ENCODE measurements at regions of chr1 and their contacts with region 1.

Region 1: GRCh38 chr1:87864676-87865075 is 536.0 kb downstream of the LMO4 start:
- DNase-seq: no peak
- H3K4me3 ChIP-seq: no peak overlapping the region
- H3K27ac ChIP-seq: no peak overlapping the region
- H3K4me1 ChIP-seq: no peaks in the 10 kb centered on the region
- H3K27me3 ChIP-seq: no peaks in the 10 kb centered on the region
- CTCF ChIP-seq: no peak
- EP300 ChIP-seq: no peak
- POLR2A ChIP-seq: no peak

Region 2: DNA sequence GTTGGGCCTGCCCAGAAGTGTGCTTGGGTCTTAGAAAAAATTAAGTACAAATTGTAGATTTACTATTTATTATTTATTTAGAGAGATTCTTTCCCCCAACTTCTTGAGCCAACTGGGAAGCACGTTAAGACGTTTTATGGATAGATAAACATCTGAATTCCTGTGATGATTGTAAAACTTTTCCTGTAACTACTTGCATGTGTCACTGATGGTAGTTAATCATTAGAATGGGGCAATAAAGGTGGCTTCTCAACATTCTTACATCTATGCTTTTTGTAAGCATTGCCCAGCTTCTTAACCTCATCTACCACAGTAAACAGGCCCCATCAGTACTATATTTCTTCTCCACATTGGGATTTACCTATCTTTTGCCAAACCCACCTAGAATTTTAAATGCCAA is 23.8 kb after region 1 on chr1:
- in situ Hi-C with region 1: no loop called
- intact Hi-C with region 1: loop called (anchors 1 kb)
- DNase-seq: no peak
- H3K4me3 ChIP-seq: no peak overlapping the region
- H3K27ac ChIP-seq: peak overlapping the region in 3 of 4 donors; percentile 12 to 45 (median 41)
- H3K4me1 ChIP-seq: peaks cover 11 to 25% (median 14%) of the 10 kb centered on the region in 4 donors
- H3K27me3 ChIP-seq: no peaks in the 10 kb centered on the region
- CTCF ChIP-seq: no peak
- EP300 ChIP-seq: no peak
- POLR2A ChIP-seq: no peak

Region 3: DNA sequence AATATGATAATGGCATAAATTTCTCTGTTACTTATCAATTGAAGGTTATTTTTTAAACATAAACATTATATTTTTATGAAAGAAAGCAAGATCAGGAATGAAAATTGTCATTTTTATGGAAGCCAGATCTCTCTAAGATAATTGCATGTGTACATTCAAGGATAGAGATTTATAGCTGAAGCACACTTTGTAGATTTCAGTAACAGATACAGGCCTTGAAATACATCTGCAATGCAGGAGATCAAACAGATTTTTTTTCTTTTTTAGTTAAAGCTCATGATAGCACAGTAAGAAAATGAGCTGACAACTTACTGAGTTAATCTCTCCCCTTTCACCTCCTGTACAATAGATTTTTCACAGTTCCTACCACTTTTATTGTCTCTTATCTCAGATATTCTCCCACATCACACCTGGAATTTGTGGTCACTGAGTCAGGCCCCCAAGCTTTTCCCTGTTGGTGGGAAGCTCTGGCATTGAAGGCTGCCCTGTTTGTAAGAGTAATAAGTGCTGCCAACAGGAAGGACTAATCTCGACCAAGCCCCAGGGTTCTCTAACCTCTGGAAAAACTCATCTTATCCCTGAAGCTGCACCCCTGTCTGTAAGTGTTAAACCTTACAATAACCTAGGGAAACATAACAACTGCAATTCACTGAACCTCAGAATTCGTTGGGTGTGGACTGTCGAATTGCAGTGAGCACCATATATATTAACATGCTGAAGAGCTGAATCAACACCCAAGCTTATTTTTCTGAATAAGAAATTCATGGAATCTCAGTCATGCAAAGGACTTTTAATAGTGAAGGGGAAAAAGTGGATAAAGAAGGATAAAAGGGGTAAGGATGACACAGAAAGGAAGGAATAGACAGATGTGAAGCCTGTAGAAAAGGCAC is 63.0 kb after region 1 on chr1:
- in situ Hi-C with region 1: no loop called
- intact Hi-C with region 1: no loop called
- DNase-seq: no peak
- H3K4me3 ChIP-seq: no peak overlapping the region
- H3K27ac ChIP-seq: no peak overlapping the region
- H3K4me1 ChIP-seq: peaks cover 0 to 3% (median 0%) of the 10 kb centered on the region in 4 donors
- H3K27me3 ChIP-seq: no peaks in the 10 kb centered on the region
- CTCF ChIP-seq: no peak
- EP300 ChIP-seq: no peak
- POLR2A ChIP-seq: no peak

Region 4: DNA sequence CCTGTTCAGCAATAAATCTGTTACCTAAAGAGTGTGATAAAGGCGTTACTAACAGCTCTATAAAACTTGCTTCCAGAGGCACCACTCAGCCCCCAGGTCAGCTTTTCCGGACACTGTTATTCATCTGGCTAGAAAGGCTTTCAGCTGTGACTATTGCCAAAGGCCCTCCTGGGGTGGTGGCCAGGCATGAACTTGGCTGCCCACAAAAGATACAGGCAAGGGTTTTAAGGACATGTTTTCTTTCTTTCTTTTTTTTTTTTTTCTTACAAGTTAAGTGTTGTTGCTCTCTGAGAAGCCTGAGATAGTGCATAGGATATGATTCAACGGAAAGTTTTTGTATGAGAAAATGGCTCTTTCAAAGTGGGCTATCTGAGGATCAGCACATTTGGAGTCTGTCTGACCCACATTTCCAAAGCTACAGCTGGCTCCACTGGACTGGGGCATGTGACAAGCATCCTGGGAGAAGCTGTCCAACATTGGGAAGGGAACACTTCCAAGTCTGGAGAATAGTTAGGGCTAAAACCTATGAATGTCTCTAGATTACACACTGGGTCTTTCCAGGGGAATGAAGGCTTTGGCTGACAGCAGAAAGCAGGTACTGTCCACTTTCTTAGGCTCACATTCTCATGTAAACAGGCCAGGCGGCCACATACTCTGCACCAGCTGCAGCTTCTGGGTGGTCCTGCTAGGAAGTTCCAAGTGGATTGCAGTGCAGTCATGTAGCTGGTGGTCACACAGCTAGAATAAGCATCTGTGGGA is 103.7 kb after region 1 on chr1:
- in situ Hi-C with region 1: no loop called
- intact Hi-C with region 1: no loop called
- DNase-seq: peak; percentile 14
- H3K4me3 ChIP-seq: no peak overlapping the region
- H3K27ac ChIP-seq: peak overlapping the region; percentile 1 to 39 (median 26)
- H3K4me1 ChIP-seq: peaks cover 0 to 8% (median 0%) of the 10 kb centered on the region in 4 donors
- H3K27me3 ChIP-seq: no peaks in the 10 kb centered on the region
- CTCF ChIP-seq: no peak
- EP300 ChIP-seq: no peak
- POLR2A ChIP-seq: no peak